ENCODE measurements at regions of chr11 and their contacts with region 1.

Region 1: DNA sequence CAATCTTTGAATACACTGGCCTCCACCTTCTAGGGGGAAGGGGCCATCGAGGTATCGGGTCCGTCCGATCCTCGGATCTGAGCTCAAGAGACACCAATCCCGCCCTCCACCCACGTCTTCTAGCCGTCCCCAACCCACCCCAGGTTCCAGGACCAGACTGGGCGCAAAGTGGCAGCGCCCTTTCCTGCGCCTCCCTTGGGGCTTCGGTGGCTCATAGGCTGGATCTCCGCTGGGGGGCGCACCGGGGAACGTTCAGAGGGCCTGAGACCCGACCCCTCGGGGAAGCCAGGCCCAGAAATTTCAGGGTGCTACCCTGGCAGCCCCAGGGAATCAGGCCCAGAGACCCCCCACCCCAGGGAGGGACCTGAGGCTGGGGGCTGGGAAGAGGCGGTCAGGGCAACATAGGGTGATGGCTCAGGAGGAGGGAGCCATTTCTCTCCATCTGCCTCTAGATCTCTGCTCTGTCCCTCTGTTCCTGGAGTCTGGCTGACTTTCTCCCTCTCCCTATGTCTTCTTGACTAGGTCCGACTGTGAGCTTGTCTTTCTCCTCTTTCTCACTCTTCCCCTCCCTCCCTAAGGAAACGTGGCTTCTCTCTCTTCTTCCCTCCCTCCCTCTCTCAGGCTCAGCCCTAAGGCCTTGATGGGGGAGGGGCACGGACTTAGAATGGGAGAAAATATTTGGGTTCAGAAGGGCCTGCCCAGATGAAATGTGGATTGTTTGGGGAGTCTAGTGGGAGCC is 1.1 kb downstream of the CREB3L1 start:
- DNase-seq: no peak
- CTCF ChIP-seq: peak; percentile 57

Region 2: GRCh38 chr11:46253258-46254132 is 25.1 kb before region 1 on chr11:
- CTCF ChIA-PET with region 1: no interaction called
- POLR2A ChIA-PET with region 1: no interaction called
- DNase-seq: no peak
- CTCF ChIP-seq: no peak

Region 3: GRCh38 chr11:46265764-46266163 is 12.8 kb before region 1 on chr11:
- CTCF ChIA-PET with region 1: interaction called, 10 read pairs
- POLR2A ChIA-PET with region 1: no interaction called
- DNase-seq: no peak
- CTCF ChIP-seq: no peak

Region 4: DNA sequence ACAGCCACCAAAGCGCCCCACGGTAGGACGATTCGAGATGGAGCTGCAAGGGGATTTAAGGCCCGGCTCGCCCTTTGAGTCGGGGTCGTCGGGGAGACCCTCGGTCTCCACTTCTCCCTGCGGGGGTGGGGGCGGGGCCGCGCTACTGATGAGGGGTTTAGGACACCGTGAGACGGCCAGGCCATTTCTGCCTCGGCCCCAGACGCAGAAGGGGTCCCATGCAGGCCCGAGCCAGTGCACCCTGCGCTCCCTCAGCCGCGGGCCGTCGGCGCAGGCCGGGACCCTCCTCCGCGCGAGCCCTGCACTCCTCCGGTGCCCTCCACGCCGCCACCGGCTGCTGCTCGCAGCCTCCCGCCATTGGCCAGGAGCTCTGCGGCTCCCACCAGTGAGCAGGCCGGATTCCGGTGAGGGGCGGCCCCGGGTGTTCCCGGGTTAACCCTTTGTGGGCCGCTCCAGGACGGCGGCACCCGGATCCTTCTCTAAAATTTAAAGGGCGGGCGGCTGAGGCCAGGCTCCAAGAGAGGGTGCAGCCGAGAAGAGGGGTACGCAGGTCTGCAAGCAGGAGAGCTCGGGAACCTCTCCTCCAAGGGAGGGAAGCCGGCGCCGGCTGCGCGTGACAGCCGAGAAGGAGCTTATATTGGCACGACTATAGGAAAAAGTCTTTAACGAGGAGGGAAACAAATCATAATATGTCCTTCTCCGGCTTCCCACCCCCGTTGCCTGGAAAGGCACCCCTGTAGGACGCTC is 16.9 kb after region 1 on chr11:
- CTCF ChIA-PET with region 1: interaction called, 56 read pairs
- POLR2A ChIA-PET with region 1: no interaction called
- DNase-seq: peak; percentile 82
- CTCF ChIP-seq: no peak

Region 5: DNA sequence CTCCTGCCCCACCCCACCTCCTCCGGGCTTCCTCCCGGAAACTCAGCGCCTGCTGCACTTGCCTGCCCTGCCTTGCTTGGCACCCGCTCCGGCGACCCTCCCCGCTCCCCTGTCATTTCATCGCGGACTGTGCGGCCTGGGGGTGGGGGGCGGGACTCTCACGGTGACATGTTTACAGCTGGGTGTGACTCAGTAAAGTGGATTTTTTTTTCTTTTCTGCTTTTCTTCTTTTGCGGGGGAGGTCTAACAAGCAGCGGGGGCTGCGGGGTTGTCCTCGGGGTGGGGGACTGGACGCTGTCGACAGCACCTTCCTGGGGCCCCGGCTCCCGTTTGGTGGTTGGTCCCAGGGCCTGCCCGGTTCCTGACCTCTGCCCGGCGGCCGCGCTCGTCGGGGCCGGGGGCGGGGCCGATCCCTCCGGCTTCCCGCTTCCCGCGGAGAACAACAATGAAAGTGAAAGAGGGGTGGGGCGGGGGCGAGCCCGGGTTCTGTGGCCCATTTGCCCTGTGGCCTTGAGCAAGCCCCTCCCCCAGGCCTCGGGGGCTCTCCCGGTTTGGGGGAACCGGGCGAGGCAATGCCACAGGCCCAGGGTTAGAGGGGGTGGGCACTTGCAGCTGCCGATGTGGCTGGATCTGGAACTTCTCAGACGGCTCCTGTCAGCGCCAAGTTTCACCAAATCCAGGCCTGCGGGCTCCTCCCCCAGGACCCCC is 101.9 kb after region 1 on chr11:
- CTCF ChIA-PET with region 1: no interaction called
- POLR2A ChIA-PET with region 1: no interaction called
- DNase-seq: peak; percentile 76
- CTCF ChIP-seq: no peak

Region 6: DNA sequence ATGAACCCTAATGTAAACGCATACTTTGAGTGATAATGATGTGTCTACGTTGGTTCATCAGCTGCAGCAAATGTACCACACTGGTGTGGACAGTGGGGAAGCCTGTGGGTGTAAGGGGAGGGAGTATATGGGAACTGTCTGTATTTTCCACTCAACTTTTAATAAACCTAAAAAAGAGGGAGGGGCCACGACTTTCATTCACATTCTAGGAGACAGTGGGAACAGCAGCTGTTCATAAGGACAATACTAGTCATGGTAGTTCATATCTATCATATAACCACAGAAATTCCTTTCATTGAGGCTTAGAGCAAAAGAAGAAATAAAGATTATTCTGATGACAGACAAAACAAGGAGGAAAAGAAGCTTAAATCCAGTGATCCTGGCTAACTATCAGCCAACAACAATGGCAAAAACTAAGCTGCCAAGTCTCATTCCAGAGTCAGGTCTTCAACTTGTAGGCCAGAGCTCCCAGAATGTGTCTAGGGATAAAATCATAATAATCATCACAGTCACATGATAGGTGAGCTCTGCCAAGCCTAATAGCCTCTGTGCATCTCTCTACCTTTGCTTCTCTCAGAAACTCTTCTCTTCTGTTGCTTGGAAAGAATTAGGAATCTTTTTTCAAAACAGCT is 172.4 kb after region 1 on chr11:
- CTCF ChIA-PET with region 1: no interaction called
- POLR2A ChIA-PET with region 1: no interaction called
- DNase-seq: no peak
- CTCF ChIP-seq: no peak

Measured in GM10248 (cell line).